ENCODE measurements at regions of chr2 and their contacts with region 1.

Region 1: DNA sequence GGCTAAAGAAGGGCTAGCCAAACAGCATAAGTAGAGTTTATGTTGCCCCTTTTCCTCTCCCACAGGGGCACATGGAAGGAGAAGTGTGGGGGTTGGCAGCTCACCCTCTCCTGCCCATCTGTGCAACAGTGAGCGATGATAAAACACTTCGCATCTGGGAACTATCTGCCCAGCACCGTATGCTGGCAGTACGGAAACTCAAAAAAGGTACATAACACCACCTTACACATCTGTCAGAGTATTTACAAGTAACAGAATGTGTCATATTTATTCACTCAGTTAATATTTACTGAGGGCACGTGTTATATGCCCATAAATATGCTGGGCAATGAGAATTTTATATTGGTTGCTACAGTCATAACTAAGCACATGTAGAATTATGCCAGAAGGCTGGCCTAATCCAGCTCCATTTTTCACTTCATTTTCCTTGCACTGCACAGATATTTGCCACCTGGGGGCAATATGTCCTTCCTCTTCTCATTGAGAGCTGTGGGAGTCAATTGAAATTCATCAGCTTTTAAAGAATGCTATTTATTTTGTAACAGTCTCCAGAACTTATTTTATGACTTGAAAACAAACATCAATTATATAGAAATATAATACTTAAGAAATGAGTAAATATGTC is 150.6 kb downstream of the RTN4 start:
- DNase-seq: no peak
- H3K4me3 ChIP-seq: no peak overlapping the region
- H3K27ac ChIP-seq: no peak overlapping the region
- H3K4me1 ChIP-seq: no peaks in the 10 kb centered on the region
- H3K27me3 ChIP-seq: no peaks in the 10 kb centered on the region
- CTCF ChIP-seq: peak; percentile 41

Region 2: DNA sequence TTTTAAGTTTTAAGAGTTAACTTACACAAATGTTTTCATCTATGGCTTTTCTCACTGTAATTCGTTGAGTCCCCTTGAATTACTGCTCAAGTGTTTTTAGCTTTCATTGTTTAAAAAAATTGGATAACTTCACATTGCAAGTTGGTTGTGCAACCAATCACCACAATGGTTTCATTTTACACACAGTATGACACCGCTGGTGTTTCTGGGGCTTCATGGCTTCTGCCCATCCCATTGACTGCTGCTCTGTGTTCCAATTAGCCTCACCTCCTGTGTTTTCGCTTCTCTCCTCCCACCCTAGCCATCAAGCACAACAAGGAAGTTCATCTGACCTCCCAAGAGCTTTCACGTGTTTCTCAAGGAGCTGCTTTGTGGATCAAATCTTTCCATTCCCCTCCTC is 1331.2 kb before region 1 on chr2:
- intact Hi-C with region 1: no loop called
- DNase-seq: no peak
- H3K4me3 ChIP-seq: no peak overlapping the region
- H3K27ac ChIP-seq: no peak overlapping the region
- H3K4me1 ChIP-seq: no peaks in the 10 kb centered on the region
- H3K27me3 ChIP-seq: no peaks in the 10 kb centered on the region
- CTCF ChIP-seq: no peak

Region 3: GRCh38 chr2:54708584-54709335 is 190.9 kb before region 1 on chr2:
- intact Hi-C with region 1: no loop called
- DNase-seq: peak; percentile 68
- H3K4me3 ChIP-seq: peak overlapping the region; percentile 54
- H3K27ac ChIP-seq: peak overlapping the region; percentile 29
- H3K4me1 ChIP-seq: no peaks in the 10 kb centered on the region
- H3K27me3 ChIP-seq: no peaks in the 10 kb centered on the region
- CTCF ChIP-seq: no peak

Region 4: DNA sequence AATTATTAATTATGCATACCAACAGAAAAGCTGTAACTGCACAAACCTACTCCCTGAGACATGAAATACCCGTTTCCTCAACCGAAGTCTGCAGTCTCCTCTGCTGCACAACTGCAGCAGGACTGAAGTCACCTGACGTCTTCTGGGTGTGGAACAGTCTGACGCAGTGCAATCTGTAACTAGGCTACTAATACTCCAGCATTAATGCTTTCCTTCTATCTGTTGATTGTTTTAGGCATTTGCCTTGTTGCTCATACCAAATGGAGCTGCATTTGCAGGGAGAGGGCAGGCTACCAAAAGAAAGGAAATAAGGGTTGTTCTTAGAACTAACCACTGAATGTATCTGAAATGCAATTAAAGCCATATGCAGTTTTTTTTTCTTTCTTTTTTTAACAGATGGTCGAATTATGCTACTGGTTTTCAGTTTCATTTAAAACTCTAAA is 110.5 kb after region 1 on chr2:
- intact Hi-C with region 1: loop called (anchors 5 kb)
- DNase-seq: peak; percentile 83
- H3K4me3 ChIP-seq: peak overlapping the region; percentile 30
- H3K27ac ChIP-seq: peak overlapping the region; percentile 71
- H3K4me1 ChIP-seq: peaks cover 30% of the 10 kb centered on the region
- H3K27me3 ChIP-seq: no peaks in the 10 kb centered on the region
- CTCF ChIP-seq: no peak

Region 5: GRCh38 chr2:55175254-55176025 is 275.8 kb after region 1 on chr2:
- intact Hi-C with region 1: loop called (anchors 5 kb)
- DNase-seq: no peak
- H3K4me3 ChIP-seq: no peak overlapping the region
- H3K27ac ChIP-seq: no peak overlapping the region
- H3K4me1 ChIP-seq: no peaks in the 10 kb centered on the region
- H3K27me3 ChIP-seq: no peaks in the 10 kb centered on the region
- CTCF ChIP-seq: peak; percentile 49

Measured in colonic mucosa (tissue), 4 donors.